GM12878 (cell line): ENCODE measurements at regions of chr6 and their contacts with region 1.

Region 1: GRCh38 chr6:114747987-114748630 is 405.3 kb upstream of the HS3ST5 start:
- DNase-seq: no peak
- ATAC-seq: peak; percentile 75
- H3K4me3 ChIP-seq: no peak overlapping the region
- H3K27ac ChIP-seq: no peak overlapping the region
- H3K4me1 ChIP-seq: no peaks in the 10 kb centered on the region
- H3K27me3 ChIP-seq: no peaks in the 10 kb centered on the region
- CTCF ChIP-seq: peak; percentile 64 to 67 (median 66)
- EP300 ChIP-seq: no peak
- POLR2A ChIP-seq: no peak
- RAD21 ChIP-seq: peak; percentile 76

Region 2: DNA sequence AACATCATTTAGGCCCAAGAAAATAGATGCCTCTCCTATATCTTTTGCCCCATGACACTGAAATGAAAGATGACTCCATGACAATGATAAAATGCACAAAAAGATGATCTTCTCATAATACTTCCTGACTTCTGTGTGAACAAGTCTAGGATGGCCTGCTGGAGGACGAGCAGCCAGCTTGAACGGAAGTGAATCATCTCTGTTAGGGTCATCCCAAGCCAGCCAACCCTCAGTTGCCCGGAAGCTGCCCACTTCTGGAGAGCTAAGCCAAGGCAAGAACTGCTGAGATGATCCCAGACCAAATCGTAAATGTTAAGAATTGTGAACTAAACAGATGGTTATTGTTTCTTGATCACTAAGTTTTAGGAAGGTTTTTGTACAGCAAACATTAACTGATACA is 155.6 kb before region 1 on chr6:
- CTCF ChIA-PET with region 1: no interaction called
- POLR2A ChIA-PET with region 1: no interaction called
- RAD21 ChIA-PET with region 1: no interaction called
- SMC1A ChIA-PET with region 1: no interaction called
- in situ Hi-C with region 1: no loop called
- intact Hi-C with region 1: no loop called
- DNase-seq: no peak
- ATAC-seq: no peak
- H3K4me3 ChIP-seq: no peak overlapping the region
- H3K27ac ChIP-seq: no peak overlapping the region
- H3K4me1 ChIP-seq: no peaks in the 10 kb centered on the region
- H3K27me3 ChIP-seq: no peaks in the 10 kb centered on the region
- CTCF ChIP-seq: no peak
- EP300 ChIP-seq: no peak
- POLR2A ChIP-seq: no peak
- RAD21 ChIP-seq: no peak

Region 3: DNA sequence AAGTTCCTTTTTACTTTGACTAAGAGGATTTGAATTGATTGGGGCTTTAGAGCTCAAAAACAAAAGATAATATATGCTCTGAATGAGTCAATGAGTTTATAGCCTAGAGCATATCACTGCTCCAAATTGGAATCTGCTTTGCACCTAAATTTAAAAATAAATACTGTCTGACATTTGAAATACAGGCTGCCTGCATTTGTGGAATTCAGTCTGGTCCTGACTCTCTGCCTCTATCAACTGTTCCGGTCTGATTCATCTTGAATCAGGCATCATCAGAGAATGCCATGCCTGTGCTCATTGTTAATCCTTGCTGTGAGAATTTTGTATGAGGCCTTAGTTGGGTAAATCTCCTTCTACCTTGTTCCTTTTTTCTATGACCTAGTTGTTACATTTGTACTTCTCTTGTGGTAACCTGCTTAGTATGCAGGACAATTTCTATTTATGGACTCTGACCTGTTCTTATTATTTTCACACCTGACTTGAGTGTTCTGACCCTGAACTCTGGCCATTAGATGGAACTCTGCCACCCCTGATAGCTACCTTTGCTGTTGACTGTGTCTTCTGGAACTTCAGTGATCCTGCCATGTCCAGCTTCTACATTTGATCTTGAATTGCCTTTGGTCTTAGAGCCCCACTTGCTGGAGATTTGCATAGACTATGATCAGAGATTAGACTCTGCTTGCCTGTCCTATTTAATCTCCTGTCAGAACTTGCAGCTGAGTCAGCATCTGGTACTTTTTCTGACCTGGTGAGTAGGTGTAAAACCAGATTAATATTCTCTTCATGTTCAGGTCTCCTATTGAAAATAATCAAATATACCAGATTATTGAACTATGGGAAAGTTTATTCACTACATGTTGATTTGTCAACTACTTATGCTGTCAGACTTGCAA is 37.4 kb after region 1 on chr6:
- CTCF ChIA-PET with region 1: interaction called, 14 read pairs
- POLR2A ChIA-PET with region 1: no interaction called
- RAD21 ChIA-PET with region 1: no interaction called
- SMC1A ChIA-PET with region 1: no interaction called
- in situ Hi-C with region 1: no loop called
- intact Hi-C with region 1: no loop called
- DNase-seq: peak; percentile 3
- ATAC-seq: peak; percentile 70
- H3K4me3 ChIP-seq: no peak overlapping the region
- H3K27ac ChIP-seq: no peak overlapping the region
- H3K4me1 ChIP-seq: no peaks in the 10 kb centered on the region
- H3K27me3 ChIP-seq: no peaks in the 10 kb centered on the region
- CTCF ChIP-seq: no peak
- EP300 ChIP-seq: no peak
- POLR2A ChIP-seq: no peak
- RAD21 ChIP-seq: peak; percentile 39; the same call in 1 of the 2 replicates

Region 4: GRCh38 chr6:114955363-114955762 is 207.3 kb after region 1 on chr6:
- CTCF ChIA-PET with region 1: no interaction called
- POLR2A ChIA-PET with region 1: no interaction called
- RAD21 ChIA-PET with region 1: no interaction called
- SMC1A ChIA-PET with region 1: interaction called, 3 read pairs
- in situ Hi-C with region 1: no loop called
- intact Hi-C with region 1: loop called (anchors 10 kb)
- DNase-seq: no peak
- ATAC-seq: peak; percentile 80
- H3K4me3 ChIP-seq: no peak overlapping the region
- H3K27ac ChIP-seq: no peak overlapping the region
- H3K4me1 ChIP-seq: no peaks in the 10 kb centered on the region
- H3K27me3 ChIP-seq: no peaks in the 10 kb centered on the region
- CTCF ChIP-seq: no peak
- EP300 ChIP-seq: no peak
- POLR2A ChIP-seq: no peak
- RAD21 ChIP-seq: no peak